CD8-positive, alpha-beta T cell (primary cell): ENCODE measurements at regions of chr16 and their contacts with region 1.

Region 1: DNA sequence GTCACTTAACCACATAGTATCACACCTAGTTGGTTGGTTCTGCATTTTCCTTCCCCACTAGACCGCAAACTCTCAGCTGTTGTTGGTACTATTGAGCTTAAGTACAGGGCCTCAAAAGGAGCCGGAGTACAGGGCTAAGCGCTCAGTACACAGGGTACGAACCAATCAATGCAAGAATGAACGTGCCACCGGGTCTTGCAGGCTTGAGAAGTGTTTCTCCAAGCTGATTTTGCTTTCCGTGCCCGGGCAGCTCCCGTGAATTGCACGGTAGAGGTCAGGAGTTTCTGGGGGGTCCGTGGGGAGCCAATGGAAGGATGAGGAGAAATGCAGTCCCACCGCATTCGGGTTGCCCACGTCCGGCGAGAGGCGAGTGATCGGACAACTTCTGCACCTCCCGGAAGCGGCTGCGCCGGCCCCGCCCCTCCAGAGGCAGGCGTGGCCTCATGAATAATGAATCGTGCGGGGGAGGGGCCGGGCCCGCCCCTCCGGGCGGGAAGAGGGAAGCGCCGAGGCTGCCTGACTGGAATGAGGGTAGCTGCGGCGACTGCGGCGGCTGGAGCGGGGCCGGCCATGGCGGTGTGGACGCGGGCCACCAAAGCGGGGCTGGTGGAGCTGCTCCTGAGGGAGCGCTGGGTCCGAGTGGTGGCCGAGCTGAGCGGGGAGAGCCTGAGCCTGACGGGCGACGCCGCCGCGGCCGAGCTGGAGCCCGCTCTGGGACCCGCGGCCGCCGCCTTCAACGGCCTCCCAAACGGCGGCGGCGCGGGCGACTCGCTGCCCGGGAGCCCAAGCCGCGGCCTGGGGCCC is at the start of gene SNTB2:
- DNase-seq: peak; percentile 48 to 91 (median 80)
- ATAC-seq: peak; percentile 77
- H3K4me3 ChIP-seq: peak within 1 kb of the TSS; percentile 75 to 82
- H3K4me3 Mint-ChIP-seq: peak within 1 kb of the TSS; percentile 99
- H3K27ac ChIP-seq: peak within 1 kb of the TSS; percentile 58 to 69
- H3K27ac Mint-ChIP-seq: peak within 1 kb of the TSS; percentile 97
- H3K4me1 ChIP-seq: peaks cover 32% of the 10 kb centered on the region
- H3K4me1 Mint-ChIP-seq: peaks cover 45% of the 10 kb centered on the region
- H3K27me3 ChIP-seq: no peaks in the 10 kb centered on the region
- H3K27me3 Mint-ChIP-seq: no peaks in the 10 kb centered on the region
- CTCF ChIP-seq: no peak
- total RNA-seq, gene SNTB2: 8.1 to 9.1 TPM

Region 2: GRCh38 chr16:68843482-68844210 is 343.2 kb before region 1 on chr16 and contains the start of gene TANGO6:
- CTCF ChIA-PET with region 1: no interaction called
- POLR2A ChIA-PET with region 1: no interaction called
- intact Hi-C with region 1: loop called (anchors 2 to 10 kb)
- DNase-seq: peak; percentile 81 to 93 (median 90)
- ATAC-seq: peak; percentile 95
- H3K4me3 ChIP-seq: peak within 1 kb of the TSS; percentile 86 to 94
- H3K4me3 Mint-ChIP-seq: peak within 1 kb of the TSS; percentile 92
- H3K27ac ChIP-seq: peak within 1 kb of the TSS; percentile 78 to 86
- H3K27ac Mint-ChIP-seq: peak within 1 kb of the TSS; percentile 89
- H3K4me1 ChIP-seq: peaks cover 24% of the 10 kb centered on the region
- H3K4me1 Mint-ChIP-seq: peaks cover 29% of the 10 kb centered on the region
- H3K27me3 ChIP-seq: no peaks in the 10 kb centered on the region
- H3K27me3 Mint-ChIP-seq: no peaks in the 10 kb centered on the region
- CTCF ChIP-seq: no peak
- total RNA-seq, gene TANGO6: 12.1 to 16.3 TPM

Region 3: DNA sequence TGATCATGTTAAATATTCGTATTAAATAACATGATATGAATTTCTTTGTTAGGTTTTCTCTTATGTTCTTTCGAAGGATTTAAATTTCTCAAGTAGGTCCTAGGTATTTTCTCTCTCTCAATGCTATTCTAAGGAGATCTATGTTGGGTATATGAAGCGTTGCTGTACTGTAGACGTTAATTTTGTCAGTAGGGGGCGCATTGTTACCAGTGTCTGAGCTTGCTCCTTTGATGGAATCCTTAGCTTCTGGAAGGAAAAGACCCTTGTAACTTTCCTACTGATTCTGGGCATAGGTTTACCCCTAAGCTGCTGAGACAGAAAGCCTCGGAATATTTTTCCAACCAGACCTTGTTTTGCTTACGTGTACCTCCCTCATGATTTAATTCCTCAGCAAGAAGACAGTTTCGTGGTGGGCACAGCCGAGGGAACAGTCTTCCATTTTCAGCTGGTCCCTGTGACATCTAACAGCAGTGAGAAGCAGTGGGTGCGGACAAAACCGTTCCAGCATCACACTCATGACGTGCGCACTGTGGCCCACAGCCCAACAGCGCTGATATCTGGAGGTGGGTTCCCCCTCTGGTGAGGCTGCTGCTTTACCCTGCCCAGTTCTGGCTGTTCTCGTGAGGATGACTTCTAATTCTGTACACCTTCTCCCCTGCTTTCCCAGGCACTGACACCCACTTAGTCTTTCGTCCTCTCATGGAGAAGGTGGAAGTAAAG is 36.5 kb before region 1 on chr16:
- CTCF ChIA-PET with region 1: interaction called, 9 read pairs
- POLR2A ChIA-PET with region 1: interaction called, 3 read pairs
- intact Hi-C with region 1: loop called in 1 of 2 experiments (anchors 5 kb)
- DNase-seq: peak in 7 of 9 experiments; percentile 32 to 81 (median 60)
- ATAC-seq: peak; percentile 77
- H3K4me3 ChIP-seq: no peak overlapping the region
- H3K4me3 Mint-ChIP-seq: no peak overlapping the region
- H3K27ac ChIP-seq: no peak overlapping the region
- H3K27ac Mint-ChIP-seq: no peak overlapping the region
- H3K4me1 ChIP-seq: no peaks in the 10 kb centered on the region
- H3K4me1 Mint-ChIP-seq: no peaks in the 10 kb centered on the region
- H3K27me3 ChIP-seq: no peaks in the 10 kb centered on the region
- H3K27me3 Mint-ChIP-seq: no peaks in the 10 kb centered on the region
- CTCF ChIP-seq: peak; percentile 71

Region 4: GRCh38 chr16:69201787-69202186 is 14.9 kb after region 1 on chr16:
- CTCF ChIA-PET with region 1: no interaction called
- POLR2A ChIA-PET with region 1: no interaction called
- intact Hi-C with region 1: no loop called
- DNase-seq: no peak
- ATAC-seq: no peak
- H3K4me3 ChIP-seq: no peak overlapping the region
- H3K4me3 Mint-ChIP-seq: no peak overlapping the region
- H3K27ac ChIP-seq: no peak overlapping the region
- H3K27ac Mint-ChIP-seq: peak overlapping the region; percentile 3
- H3K4me1 ChIP-seq: no peaks in the 10 kb centered on the region
- H3K4me1 Mint-ChIP-seq: peaks cover 16% of the 10 kb centered on the region
- H3K27me3 ChIP-seq: no peaks in the 10 kb centered on the region
- H3K27me3 Mint-ChIP-seq: no peaks in the 10 kb centered on the region
- CTCF ChIP-seq: no peak

Region 5: GRCh38 chr16:69310653-69311532 is 124.0 kb after region 1 on chr16 and contains the start of gene VPS4A:
- CTCF ChIA-PET with region 1: no interaction called
- POLR2A ChIA-PET with region 1: interaction called, 6 read pairs
- intact Hi-C with region 1: loop called (anchors 1 to 2 kb)
- DNase-seq: peak; percentile 96 to 99 (median 98)
- ATAC-seq: peak; percentile 98
- H3K4me3 ChIP-seq: peak within 1 kb of the TSS; percentile 66 to 79
- H3K4me3 Mint-ChIP-seq: peak within 1 kb of the TSS; percentile 99
- H3K27ac ChIP-seq: peak within 1 kb of the TSS; percentile 72 to 82
- H3K27ac Mint-ChIP-seq: peak within 1 kb of the TSS; percentile 95
- H3K4me1 ChIP-seq: peaks cover 17% of the 10 kb centered on the region
- H3K4me1 Mint-ChIP-seq: peaks cover 27% of the 10 kb centered on the region
- H3K27me3 ChIP-seq: no peaks in the 10 kb centered on the region
- H3K27me3 Mint-ChIP-seq: no peaks in the 10 kb centered on the region
- CTCF ChIP-seq: peak; percentile 73
- total RNA-seq, gene VPS4A: 64.2 to 66.5 TPM

Region 6: GRCh38 chr16:69386596-69386995 is 199.8 kb after region 1 on chr16:
- CTCF ChIA-PET with region 1: no interaction called
- POLR2A ChIA-PET with region 1: no interaction called
- intact Hi-C with region 1: loop called in 1 of 2 experiments (anchors 5 kb)
- DNase-seq: no peak
- ATAC-seq: no peak
- H3K4me3 ChIP-seq: peak overlapping the region in 1 of 2 experiments; percentile 46
- H3K4me3 Mint-ChIP-seq: peak overlapping the region; percentile 89
- H3K27ac ChIP-seq: peak overlapping the region in 1 of 2 experiments; percentile 55
- H3K27ac Mint-ChIP-seq: no peak overlapping the region
- H3K4me1 ChIP-seq: peaks cover 12% of the 10 kb centered on the region
- H3K4me1 Mint-ChIP-seq: peaks cover 30% of the 10 kb centered on the region
- H3K27me3 ChIP-seq: no peaks in the 10 kb centered on the region
- H3K27me3 Mint-ChIP-seq: no peaks in the 10 kb centered on the region
- CTCF ChIP-seq: no peak